Dendritic cell treated with granulocyte-macrophage colony-stimulating factor and Interleukin-4, amounts not matched to agents 40 ng/mL and 50 ng/mL, for 4 days (primary cell): ENCODE measurements at regions of chr20 and their contacts with region 1.

Region 1: DNA sequence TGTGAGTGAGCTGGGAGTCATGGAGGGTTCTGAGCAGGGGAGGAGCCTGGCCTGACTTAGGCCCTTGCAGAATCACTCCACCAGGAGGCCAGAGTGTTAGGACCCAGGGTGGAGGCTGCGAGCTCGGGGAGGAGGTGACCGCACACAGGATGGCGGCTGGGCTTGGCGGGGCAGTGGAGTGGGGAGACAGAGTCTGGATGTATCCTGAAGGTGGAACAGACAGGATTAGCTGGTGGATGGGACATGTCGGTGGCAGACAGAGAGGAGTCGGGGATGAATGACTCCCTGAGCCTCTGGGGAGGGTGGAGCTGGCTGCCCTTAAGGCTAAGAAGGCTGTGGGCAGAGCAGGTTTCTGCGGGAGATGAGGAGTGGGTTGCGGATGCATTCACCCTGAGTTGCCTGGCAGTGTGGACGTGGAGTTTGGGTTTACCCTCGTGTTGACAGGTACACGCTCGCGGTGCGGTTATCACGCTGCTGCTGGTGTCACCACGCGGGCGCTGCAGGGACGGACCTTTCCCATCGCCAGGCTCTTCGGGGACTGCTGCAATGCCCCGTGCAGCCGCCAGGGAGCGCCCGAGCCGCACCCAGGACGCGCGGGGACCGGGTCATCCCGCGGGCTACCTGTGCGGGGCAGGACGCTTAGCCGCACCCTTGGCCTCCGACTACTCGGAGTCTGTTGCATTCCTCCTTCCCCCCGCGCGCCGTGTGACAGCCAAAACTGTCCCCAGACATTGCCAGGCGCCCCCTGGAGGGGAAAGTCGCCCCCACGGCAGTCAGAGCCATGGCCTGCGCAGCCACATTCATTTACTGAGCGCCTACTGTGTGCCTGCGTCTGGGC is 43.0 kb upstream of the PTGIS start:
- H3K4me3 Mint-ChIP-seq: peak overlapping the region; percentile 57
- H3K27ac Mint-ChIP-seq: no peak overlapping the region
- H3K4me1 Mint-ChIP-seq: peaks cover 16% of the 10 kb centered on the region
- H3K27me3 Mint-ChIP-seq: peaks cover 17% of the 10 kb centered on the region

Region 2: GRCh38 chr20:49330544-49331239 is 280.2 kb before region 1 on chr20:
- intact Hi-C with region 1: loop called (anchors 5 kb)
- H3K4me3 Mint-ChIP-seq: no peak overlapping the region
- H3K27ac Mint-ChIP-seq: no peak overlapping the region
- H3K4me1 Mint-ChIP-seq: peaks cover 2% of the 10 kb centered on the region
- H3K27me3 Mint-ChIP-seq: peaks cover 20% of the 10 kb centered on the region

Region 3: GRCh38 chr20:49541733-49542513 is 69.0 kb before region 1 on chr20:
- intact Hi-C with region 1: loop called (anchors 1 kb)
- H3K4me3 Mint-ChIP-seq: no peak overlapping the region
- H3K27ac Mint-ChIP-seq: no peak overlapping the region
- H3K4me1 Mint-ChIP-seq: no peaks in the 10 kb centered on the region
- H3K27me3 Mint-ChIP-seq: peaks cover 12% of the 10 kb centered on the region

Region 4: DNA sequence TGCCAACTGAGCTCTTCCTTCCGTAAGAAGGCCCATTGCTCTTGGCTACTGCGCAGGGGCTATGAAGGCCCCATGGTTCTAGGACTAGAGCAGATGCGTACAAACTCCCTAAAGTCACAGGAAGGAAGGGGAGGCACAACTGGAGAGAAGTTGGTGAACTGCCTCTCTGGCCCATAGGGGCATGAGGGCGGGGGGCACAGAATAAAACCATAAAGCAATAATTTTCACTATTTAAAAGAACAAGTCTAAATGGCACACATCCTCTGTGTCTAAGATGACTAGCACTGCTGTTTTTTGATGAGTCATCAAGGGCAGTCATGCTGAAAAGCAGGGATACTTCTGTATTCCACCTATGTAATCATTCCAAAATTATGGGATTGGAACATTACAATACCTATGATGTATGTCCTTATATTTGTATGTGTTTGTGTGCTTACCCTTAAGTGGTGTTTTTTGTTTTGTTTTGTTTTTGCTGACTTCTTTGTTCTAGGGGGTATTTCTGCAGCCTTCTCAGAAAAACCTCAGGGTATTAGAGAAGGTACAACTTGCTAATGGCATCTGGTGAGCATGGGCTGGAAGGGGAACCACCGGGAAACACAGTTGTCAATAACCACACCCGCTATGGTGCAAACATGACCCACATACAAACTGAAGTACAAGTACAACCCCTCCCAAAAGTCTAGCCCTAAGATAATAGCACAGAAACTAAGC is 65.8 kb after region 1 on chr20:
- intact Hi-C with region 1: no loop called
- H3K4me3 Mint-ChIP-seq: peak overlapping the region; percentile 42
- H3K27ac Mint-ChIP-seq: peak overlapping the region; percentile 88
- H3K4me1 Mint-ChIP-seq: peaks cover 89% of the 10 kb centered on the region
- H3K27me3 Mint-ChIP-seq: no peaks in the 10 kb centered on the region

Region 5: GRCh38 chr20:49846206-49846807 is 235.4 kb after region 1 on chr20:
- intact Hi-C with region 1: loop called (anchors 1 kb)
- H3K4me3 Mint-ChIP-seq: no peak overlapping the region
- H3K27ac Mint-ChIP-seq: no peak overlapping the region
- H3K4me1 Mint-ChIP-seq: peaks cover 6% of the 10 kb centered on the region
- H3K27me3 Mint-ChIP-seq: no peaks in the 10 kb centered on the region